Endothelial cell of umbilical vein (primary cell): ENCODE measurements at regions of chr16 and their contacts with region 1.

Region 1: DNA sequence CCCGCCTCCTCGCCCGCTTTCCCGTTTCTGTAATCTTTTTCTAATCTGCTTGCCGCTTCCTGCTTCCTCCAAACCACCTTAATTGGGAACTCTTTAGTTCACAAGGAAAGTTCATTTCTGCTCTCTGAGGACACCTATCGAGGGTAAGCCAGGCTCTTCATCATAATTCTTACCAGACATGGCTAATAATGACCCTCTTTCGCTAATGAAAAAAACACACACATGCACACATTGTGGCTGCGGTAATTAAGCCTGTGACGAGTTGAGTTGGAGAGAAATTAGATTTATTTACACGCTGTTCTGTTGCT is 100.6 kb downstream of the ZNF423 start:
- DNase-seq: peak; percentile 63
- H3K4me3 ChIP-seq: peak overlapping the region in 2 of 3 experiments; percentile 16 to 18
- H3K27ac ChIP-seq: no peak overlapping the region
- H3K4me1 ChIP-seq: peaks cover 12% of the 10 kb centered on the region
- H3K27me3 ChIP-seq: no peaks in the 10 kb centered on the region
- CTCF ChIP-seq: peak; percentile 26 to 46
- POLR2A ChIP-seq: no peak

Region 2: DNA sequence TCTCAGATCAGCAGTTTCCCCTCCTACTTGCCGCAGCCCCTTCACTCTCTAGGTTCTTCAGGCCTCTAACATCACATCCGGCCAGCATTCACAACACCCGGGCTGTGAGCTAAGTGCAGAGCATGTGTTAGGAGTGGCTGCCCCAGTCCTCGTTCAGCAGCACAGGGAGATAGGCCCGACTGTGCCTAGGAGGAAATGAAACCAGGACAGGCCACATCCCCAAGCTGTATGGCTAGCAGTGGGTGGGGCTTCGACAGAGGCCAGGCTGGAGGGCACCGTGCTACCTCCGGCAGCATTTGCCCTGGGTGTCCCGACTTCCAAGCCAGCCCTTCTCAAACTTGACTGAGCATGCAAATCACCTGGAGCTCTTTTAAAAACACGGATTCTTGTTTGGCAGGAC is 179.9 kb before region 1 on chr16:
- CTCF ChIA-PET with region 1: no interaction called
- POLR2A ChIA-PET with region 1: no interaction called
- dilution Hi-C with region 1: no loop called
- intact Hi-C with region 1: no loop called
- DNase-seq: no peak
- H3K4me3 ChIP-seq: no peak overlapping the region
- H3K27ac ChIP-seq: no peak overlapping the region
- H3K4me1 ChIP-seq: no peaks in the 10 kb centered on the region
- H3K27me3 ChIP-seq: no peaks in the 10 kb centered on the region
- CTCF ChIP-seq: no peak
- POLR2A ChIP-seq: no peak

Region 3: DNA sequence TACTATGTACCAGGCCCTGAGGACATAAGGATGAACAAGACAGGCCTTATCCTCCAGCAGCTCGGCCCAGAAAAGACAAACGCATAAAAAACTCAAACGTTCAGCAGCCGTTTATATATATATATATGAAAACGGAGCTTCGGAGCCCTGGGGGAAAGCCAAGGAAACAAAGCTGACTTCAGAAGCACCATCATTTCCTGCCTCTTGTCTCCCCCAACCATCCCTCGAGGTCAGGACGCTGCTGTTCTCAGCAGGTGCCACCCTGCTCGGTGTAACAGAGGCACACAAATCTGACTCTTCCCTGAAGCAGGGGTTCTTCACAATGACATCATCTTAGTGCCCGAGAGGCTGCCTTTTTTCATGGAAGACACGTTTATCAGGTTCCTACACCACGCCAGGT is 46.2 kb before region 1 on chr16:
- CTCF ChIA-PET with region 1: no interaction called
- POLR2A ChIA-PET with region 1: no interaction called
- dilution Hi-C with region 1: no loop called
- intact Hi-C with region 1: no loop called
- DNase-seq: no peak
- H3K4me3 ChIP-seq: no peak overlapping the region
- H3K27ac ChIP-seq: no peak overlapping the region
- H3K4me1 ChIP-seq: no peaks in the 10 kb centered on the region
- H3K27me3 ChIP-seq: no peaks in the 10 kb centered on the region
- CTCF ChIP-seq: no peak
- POLR2A ChIP-seq: no peak

Region 4: GRCh38 chr16:49827805-49828438 is 72.7 kb after region 1 on chr16:
- CTCF ChIA-PET with region 1: no interaction called
- POLR2A ChIA-PET with region 1: no interaction called
- dilution Hi-C with region 1: no loop called
- intact Hi-C with region 1: loop called (anchors 2 kb)
- DNase-seq: peak; percentile 77
- H3K4me3 ChIP-seq: no peak overlapping the region
- H3K27ac ChIP-seq: no peak overlapping the region
- H3K4me1 ChIP-seq: peaks cover 42% of the 10 kb centered on the region
- H3K27me3 ChIP-seq: no peaks in the 10 kb centered on the region
- CTCF ChIP-seq: no peak
- POLR2A ChIP-seq: no peak